ENCODE measurements at regions of chr2 and their contacts with region 1.

Region 1: DNA sequence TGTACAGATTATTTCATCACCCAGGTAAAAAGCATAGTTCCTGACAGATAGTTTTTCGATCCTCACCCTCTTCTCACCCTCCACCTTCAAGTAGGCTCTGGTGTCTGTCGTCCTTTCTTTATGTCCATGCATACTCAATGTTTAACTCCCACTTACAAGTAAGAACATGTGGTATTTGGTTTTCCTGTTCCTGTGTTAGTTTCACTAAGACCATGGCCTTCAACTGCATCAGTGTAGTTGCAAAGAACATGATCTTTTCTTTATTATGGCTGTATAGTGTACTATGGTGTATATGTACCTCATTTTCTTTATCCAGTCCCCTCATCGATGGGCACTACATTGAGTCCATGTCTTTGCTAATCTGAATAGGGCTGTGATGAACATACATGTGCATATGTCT is 184.2 kb downstream of the KCNJ3 start:
- DNase-seq: no peak
- ATAC-seq: no peak
- H3K4me3 ChIP-seq: no peak overlapping the region
- H3K4me3 Mint-ChIP-seq: no peak overlapping the region
- H3K27ac ChIP-seq: no peak overlapping the region
- H3K27ac Mint-ChIP-seq: no peak overlapping the region
- H3K4me1 ChIP-seq: no peaks in the 10 kb centered on the region
- H3K4me1 Mint-ChIP-seq: no peaks in the 10 kb centered on the region
- H3K27me3 ChIP-seq: no peaks in the 10 kb centered on the region
- H3K27me3 Mint-ChIP-seq: no peaks in the 10 kb centered on the region
- CTCF ChIP-seq: no peak

Region 2: GRCh38 chr2:155010925-155011324 is 128.2 kb after region 1 on chr2:
- CTCF ChIA-PET with region 1: no interaction called
- POLR2A ChIA-PET with region 1: no interaction called
- intact Hi-C with region 1: loop called in 1 of 2 experiments (anchors 5 kb)
- DNase-seq: no peak
- ATAC-seq: no peak
- H3K4me3 ChIP-seq: no peak overlapping the region
- H3K4me3 Mint-ChIP-seq: no peak overlapping the region
- H3K27ac ChIP-seq: no peak overlapping the region
- H3K27ac Mint-ChIP-seq: no peak overlapping the region
- H3K4me1 ChIP-seq: no peaks in the 10 kb centered on the region
- H3K4me1 Mint-ChIP-seq: no peaks in the 10 kb centered on the region
- H3K27me3 ChIP-seq: no peaks in the 10 kb centered on the region
- H3K27me3 Mint-ChIP-seq: no peaks in the 10 kb centered on the region
- CTCF ChIP-seq: no peak